B cell (primary cell): ENCODE measurements at regions of chr19 and their contacts with region 1.

Region 1: DNA sequence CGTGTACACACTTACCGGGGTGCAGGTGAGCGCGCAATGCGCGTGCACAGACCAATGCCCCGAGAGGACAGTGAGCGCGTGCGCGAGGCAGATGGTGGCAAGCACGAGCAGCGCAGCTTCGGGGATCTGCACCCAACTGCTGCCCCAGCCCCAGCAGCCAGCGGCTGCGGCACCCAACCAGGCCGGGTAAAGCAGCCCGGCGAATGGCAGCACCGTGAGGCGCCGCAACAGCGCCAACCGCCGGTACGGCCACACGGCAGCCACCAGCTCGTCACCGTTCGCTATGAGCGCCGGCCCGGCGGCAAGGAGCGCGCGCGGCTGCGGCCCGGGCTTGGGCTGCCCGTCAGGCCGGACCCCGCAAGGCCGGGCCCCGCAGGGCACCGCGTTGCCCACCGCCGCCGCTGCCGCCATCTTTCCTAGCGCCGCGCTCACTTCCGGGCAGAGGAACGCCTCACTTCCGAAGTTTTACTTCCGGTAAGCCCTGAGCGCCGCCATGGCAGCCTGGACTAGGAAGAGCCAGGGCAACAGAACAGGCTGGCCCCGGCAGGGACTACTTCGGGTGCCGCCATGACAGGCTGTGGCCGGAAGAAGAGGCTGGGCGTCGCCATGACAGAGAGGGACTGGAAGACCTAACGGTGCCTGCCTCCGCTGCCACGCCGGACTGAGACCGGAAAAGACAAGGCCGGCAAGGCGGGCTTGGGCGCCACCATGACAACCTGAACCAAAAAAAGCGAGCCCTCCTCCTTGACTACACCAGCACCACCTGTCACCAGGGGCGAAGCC is at the start of gene ATP13A1:
- DNase-seq: peak; percentile 99
- ATAC-seq: peak; percentile 79
- H3K4me3 ChIP-seq: peak within 1 kb of the TSS; percentile 75 to 88 (median 77)
- H3K4me3 Mint-ChIP-seq: peak within 1 kb of the TSS; percentile 93
- H3K27ac ChIP-seq: peak within 1 kb of the TSS; percentile 77 to 97
- H3K27ac Mint-ChIP-seq: peak within 1 kb of the TSS; percentile 98
- H3K4me1 ChIP-seq: peaks cover 39 to 60% of the 10 kb centered on the region in 2 donors
- H3K4me1 Mint-ChIP-seq: peaks cover 40% of the 10 kb centered on the region
- H3K27me3 ChIP-seq: no peaks in the 10 kb centered on the region
- H3K27me3 Mint-ChIP-seq: no peaks in the 10 kb centered on the region
- CTCF ChIP-seq: peak; percentile 22
- total RNA-seq, gene ATP13A1: 153 and 156 TPM in 2 replicates

Region 2: GRCh38 chr19:19531951-19532805 is 131.3 kb before region 1 on chr19:
- CTCF ChIA-PET with region 1: interaction called, 12 read pairs
- POLR2A ChIA-PET with region 1: interaction called, 4 read pairs
- intact Hi-C with region 1: no loop called
- DNase-seq: peak; percentile 87
- ATAC-seq: peak; percentile 78
- H3K4me3 ChIP-seq: no peak overlapping the region
- H3K4me3 Mint-ChIP-seq: no peak overlapping the region
- H3K27ac ChIP-seq: no peak overlapping the region
- H3K27ac Mint-ChIP-seq: peak overlapping the region; percentile 86
- H3K4me1 ChIP-seq: peaks cover 7 to 9% of the 10 kb centered on the region in 2 donors
- H3K4me1 Mint-ChIP-seq: peaks cover 6% of the 10 kb centered on the region
- H3K27me3 ChIP-seq: peaks cover 0 to 1% (median 0%) of the 10 kb centered on the region in 4 experiments
- H3K27me3 Mint-ChIP-seq: no peaks in the 10 kb centered on the region
- CTCF ChIP-seq: peak; percentile 95

Region 3: DNA sequence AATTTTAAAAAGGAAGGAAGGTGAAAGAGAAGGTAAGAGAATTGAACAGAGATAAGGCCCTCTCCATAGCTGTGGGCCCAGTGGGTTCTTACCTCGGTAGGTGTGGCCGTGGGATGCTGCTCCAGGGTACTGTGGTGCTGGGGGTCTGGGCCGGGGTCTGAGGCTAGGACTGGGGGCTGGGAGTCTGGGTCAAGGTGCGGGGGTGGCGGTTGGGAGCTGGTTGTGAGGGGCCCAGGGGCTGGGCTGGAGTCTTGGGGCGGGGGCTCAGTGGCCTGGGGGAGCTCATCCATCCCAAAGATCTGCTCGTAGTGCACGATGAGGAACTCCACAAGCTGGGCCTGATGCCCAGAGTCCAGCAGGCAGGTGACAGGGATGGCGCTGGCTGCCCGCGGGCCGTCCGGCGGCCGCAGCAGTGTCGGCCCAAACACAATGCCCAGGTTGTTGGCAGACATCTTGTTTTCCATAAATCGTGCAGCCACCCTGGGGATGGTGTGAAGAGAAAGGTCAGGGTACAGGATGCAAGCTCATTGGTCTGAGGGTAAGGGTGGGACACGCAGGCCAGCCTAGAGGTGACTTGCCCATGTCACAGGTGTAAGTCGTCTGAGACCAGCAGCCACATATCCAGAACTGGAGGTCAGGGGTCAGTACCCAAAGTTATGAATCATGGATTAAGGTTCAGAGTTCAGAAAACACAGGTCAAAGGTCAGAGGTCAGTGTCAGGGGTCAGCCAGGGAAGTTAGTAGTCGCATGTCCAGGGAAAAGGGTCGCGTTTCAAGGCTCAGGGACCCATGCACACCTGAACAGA is 29.5 kb before region 1 on chr19:
- CTCF ChIA-PET with region 1: interaction called, 4 read pairs
- POLR2A ChIA-PET with region 1: interaction called, 10 read pairs
- intact Hi-C with region 1: no loop called
- DNase-seq: no peak
- ATAC-seq: no peak
- H3K4me3 ChIP-seq: no peak overlapping the region
- H3K4me3 Mint-ChIP-seq: no peak overlapping the region
- H3K27ac ChIP-seq: no peak overlapping the region
- H3K27ac Mint-ChIP-seq: peak overlapping the region; percentile 20
- H3K4me1 ChIP-seq: peaks cover 0 to 6% of the 10 kb centered on the region in 2 donors
- H3K4me1 Mint-ChIP-seq: peaks cover 3% of the 10 kb centered on the region
- H3K27me3 ChIP-seq: no peaks in the 10 kb centered on the region
- H3K27me3 Mint-ChIP-seq: no peaks in the 10 kb centered on the region
- CTCF ChIP-seq: no peak

Region 4: DNA sequence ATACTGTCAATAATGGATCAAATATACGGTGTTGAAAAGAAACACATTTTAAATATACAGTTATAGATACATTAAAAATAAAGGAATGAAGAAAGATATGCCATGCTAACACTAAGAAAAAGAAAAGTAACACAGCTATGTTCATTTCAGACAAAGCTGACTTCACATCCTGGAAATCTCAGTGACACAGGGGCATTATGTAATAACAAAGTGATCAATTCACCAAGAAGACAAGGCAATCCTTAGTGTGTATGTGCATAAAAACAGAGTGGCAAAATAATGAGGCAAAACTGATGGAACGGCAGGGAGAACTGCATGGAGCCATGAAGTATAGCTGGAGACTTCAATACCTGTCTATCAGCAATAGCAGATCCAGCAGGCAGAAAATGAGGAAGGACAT is 56.4 kb after region 1 on chr19:
- CTCF ChIA-PET with region 1: no interaction called
- POLR2A ChIA-PET with region 1: no interaction called
- intact Hi-C with region 1: no loop called
- DNase-seq: no peak
- ATAC-seq: no peak
- H3K4me3 ChIP-seq: no peak overlapping the region
- H3K4me3 Mint-ChIP-seq: no peak overlapping the region
- H3K27ac ChIP-seq: no peak overlapping the region
- H3K27ac Mint-ChIP-seq: no peak overlapping the region
- H3K4me1 ChIP-seq: no peaks in the 10 kb centered on the region
- H3K4me1 Mint-ChIP-seq: peaks cover 2% of the 10 kb centered on the region
- H3K27me3 ChIP-seq: no peaks in the 10 kb centered on the region
- H3K27me3 Mint-ChIP-seq: no peaks in the 10 kb centered on the region
- CTCF ChIP-seq: no peak

Region 5: GRCh38 chr19:19732579-19733501 is 69.4 kb after region 1 on chr19 and contains the start of gene ZNF14:
- CTCF ChIA-PET with region 1: interaction called, 4 read pairs
- POLR2A ChIA-PET with region 1: interaction called, 22 read pairs
- intact Hi-C with region 1: loop called (anchors 1 kb)
- DNase-seq: peak; percentile 94
- ATAC-seq: peak; percentile 100
- H3K4me3 ChIP-seq: peak within 1 kb of the TSS; percentile 59 to 95 (median 94)
- H3K4me3 Mint-ChIP-seq: peak within 1 kb of the TSS; percentile 99
- H3K27ac ChIP-seq: peak within 1 kb of the TSS; percentile 49 to 76
- H3K27ac Mint-ChIP-seq: peak within 1 kb of the TSS; percentile 96
- H3K4me1 ChIP-seq: peaks cover 11 to 17% of the 10 kb centered on the region in 2 donors
- H3K4me1 Mint-ChIP-seq: peaks cover 27% of the 10 kb centered on the region
- H3K27me3 ChIP-seq: no peaks in the 10 kb centered on the region
- H3K27me3 Mint-ChIP-seq: no peaks in the 10 kb centered on the region
- CTCF ChIP-seq: no peak
- total RNA-seq, gene ZNF14: 21.0 and 22.5 TPM in 2 replicates

Region 6: DNA sequence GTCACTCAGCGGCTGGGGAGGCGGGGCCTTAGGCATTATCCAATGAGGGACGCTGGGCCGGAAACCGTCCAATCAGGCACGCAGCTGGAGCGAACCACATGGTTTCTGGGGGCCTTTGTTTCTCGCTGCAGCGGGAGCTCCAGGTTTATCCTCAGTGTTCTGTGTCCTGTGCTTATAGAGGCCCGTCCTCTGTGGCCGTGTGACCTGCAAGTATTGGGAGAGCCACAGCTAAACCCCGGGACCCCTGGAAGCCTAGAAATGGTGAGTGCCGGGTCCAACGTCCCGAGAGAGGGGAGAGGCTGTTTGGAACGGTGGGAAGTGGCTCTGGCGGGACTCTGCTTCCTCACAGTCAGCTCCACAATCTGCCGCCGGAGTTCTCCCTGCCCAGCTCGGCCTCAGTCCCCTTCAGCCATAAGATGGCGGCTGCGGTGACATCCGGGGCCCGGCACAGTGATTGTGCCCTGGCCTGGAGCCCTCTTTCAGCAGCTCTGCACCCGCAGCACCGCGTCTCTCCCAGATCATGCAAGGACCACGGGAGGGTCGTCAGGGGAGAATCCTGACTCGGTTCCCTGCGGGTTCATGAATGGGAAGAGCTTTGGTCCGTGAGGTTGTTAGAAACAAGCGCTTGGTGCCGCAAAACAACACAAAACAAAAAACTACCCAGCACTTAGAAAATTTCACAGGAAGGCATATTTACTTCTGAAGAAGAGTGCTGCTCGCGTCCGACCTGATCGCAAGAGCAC is 202.5 kb after region 1 on chr19 and contains the start of gene ZNF253:
- CTCF ChIA-PET with region 1: interaction called, 3 read pairs
- POLR2A ChIA-PET with region 1: interaction called, 12 read pairs
- intact Hi-C with region 1: loop called (anchors 2 kb)
- DNase-seq: peak; percentile 94
- ATAC-seq: peak; percentile 87
- H3K4me3 ChIP-seq: peak within 1 kb of the TSS; percentile 78 to 97 (median 93)
- H3K4me3 Mint-ChIP-seq: peak within 1 kb of the TSS; percentile 100
- H3K27ac ChIP-seq: peak within 1 kb of the TSS; percentile 88 to 91
- H3K27ac Mint-ChIP-seq: peak within 1 kb of the TSS; percentile 98
- H3K4me1 ChIP-seq: peaks cover 15 to 19% of the 10 kb centered on the region in 2 donors
- H3K4me1 Mint-ChIP-seq: peaks cover 35% of the 10 kb centered on the region
- H3K27me3 ChIP-seq: no peaks in the 10 kb centered on the region
- H3K27me3 Mint-ChIP-seq: no peaks in the 10 kb centered on the region
- CTCF ChIP-seq: no peak
- total RNA-seq, gene ZNF253: 28.6 and 33.7 TPM in 2 replicates